Activated CD8-positive, alpha-beta memory T cell treated with anti-CD3 and anti-CD28 coated beads, Interleukin-2, amount 10 ng/mL, durations not matched to agents 7 days and 5 days (primary cell): ENCODE measurements at regions of chr21 and their contacts with region 1.

Region 1: GRCh38 chr21:42220138-42220701 is 1.3 kb downstream of the ABCG1 start:
- DNase-seq: peak; percentile 82
- ATAC-seq: peak; percentile 80
- H3K4me3 Mint-ChIP-seq: peak overlapping the region; percentile 80
- H3K27ac Mint-ChIP-seq: peak overlapping the region; percentile 89
- H3K4me1 Mint-ChIP-seq: peaks cover 9% of the 10 kb centered on the region
- H3K27me3 Mint-ChIP-seq: no peaks in the 10 kb centered on the region

Region 2: DNA sequence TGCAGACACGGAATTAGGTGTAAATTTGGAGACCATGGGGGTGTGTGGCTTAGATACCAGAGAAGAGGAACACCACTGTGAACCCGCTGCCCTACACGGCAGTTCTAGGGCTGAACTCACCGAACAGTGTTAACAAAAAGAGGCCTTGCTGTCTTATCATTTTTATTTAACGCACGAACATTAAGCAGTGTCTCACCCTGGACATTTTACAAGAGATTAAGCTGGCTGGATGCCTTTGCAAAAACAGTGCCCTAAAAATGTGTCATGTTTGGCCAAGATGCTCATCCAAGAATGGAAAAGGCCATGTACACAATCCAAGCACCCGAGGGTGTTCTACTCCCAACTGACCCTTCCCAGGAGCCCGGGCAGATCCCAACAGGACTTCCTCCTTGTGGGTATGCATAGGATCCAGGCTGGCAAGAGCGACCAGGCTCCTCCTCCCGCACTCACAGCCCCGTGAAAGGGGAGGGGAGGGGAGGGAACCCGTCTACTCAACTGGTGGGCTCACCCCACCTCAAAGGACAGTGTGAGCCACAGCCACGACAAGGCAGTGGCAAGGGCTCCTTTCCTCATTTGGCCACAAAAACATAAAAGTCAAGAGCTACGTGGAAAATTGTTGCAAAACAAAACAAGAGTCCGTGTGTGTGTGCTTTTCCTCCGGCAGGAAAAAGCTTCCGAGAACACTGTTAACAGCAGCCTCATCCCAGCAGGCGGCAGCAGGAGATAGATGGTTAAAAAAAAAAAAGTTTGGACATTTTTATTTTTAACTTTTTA is 286.7 kb before region 1 on chr21:
- CTCF ChIA-PET with region 1: no interaction called
- DNase-seq: no peak
- ATAC-seq: no peak
- H3K4me3 Mint-ChIP-seq: no peak overlapping the region
- H3K27ac Mint-ChIP-seq: no peak overlapping the region
- H3K4me1 Mint-ChIP-seq: peaks cover 9% of the 10 kb centered on the region
- H3K27me3 Mint-ChIP-seq: peaks cover 46% of the 10 kb centered on the region

Region 3: GRCh38 chr21:42164064-42164789 is 56.0 kb before region 1 on chr21:
- CTCF ChIA-PET with region 1: interaction called, 11 read pairs
- DNase-seq: peak; percentile 80
- ATAC-seq: peak; percentile 89
- H3K4me3 Mint-ChIP-seq: no peak overlapping the region
- H3K27ac Mint-ChIP-seq: no peak overlapping the region
- H3K4me1 Mint-ChIP-seq: peaks cover 25% of the 10 kb centered on the region
- H3K27me3 Mint-ChIP-seq: peaks cover under 1% of the 10 kb centered on the region

Region 4: DNA sequence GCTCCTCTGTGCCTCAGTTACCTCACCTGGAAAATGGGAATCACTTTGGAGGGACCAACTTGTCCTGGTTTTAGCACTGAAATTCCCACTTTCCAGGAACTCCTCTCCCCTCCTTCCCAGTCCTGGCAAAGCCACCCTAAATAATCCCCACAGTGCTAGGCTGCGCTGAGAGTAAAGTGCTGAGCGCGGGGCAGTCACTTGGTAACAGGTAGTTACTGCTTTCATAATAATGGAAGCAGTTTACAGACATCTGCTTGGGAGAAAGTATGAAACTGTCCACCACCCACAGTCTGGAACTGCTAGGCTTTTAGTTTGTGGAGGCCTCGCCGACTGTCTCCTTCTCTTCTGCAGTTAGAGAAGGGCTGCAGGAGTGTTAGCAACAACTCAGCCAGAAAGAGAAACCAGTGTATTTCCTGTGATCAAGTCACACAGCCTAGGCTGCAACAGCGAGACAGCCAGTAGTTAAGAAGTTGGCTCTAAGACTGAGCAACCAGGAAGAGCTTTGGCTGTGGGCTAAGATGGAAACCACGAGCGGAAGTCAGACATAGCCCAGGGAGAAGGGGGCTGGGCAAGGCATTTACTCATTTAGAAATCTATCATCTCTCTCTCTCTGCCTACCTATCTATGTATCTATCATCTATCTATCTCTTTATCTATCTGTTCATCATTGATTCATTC is 32.1 kb before region 1 on chr21:
- CTCF ChIA-PET with region 1: interaction called, 23 read pairs
- DNase-seq: peak; percentile 95
- ATAC-seq: peak; percentile 93
- H3K4me3 Mint-ChIP-seq: peak overlapping the region; percentile 56
- H3K27ac Mint-ChIP-seq: peak overlapping the region; percentile 95
- H3K4me1 Mint-ChIP-seq: peaks cover 71% of the 10 kb centered on the region
- H3K27me3 Mint-ChIP-seq: peaks cover 18% of the 10 kb centered on the region

Region 5: GRCh38 chr21:42193131-42193671 is 27.0 kb before region 1 on chr21:
- CTCF ChIA-PET with region 1: interaction called, 23 read pairs
- DNase-seq: peak; percentile 94
- ATAC-seq: peak; percentile 40
- H3K4me3 Mint-ChIP-seq: no peak overlapping the region
- H3K27ac Mint-ChIP-seq: peak overlapping the region; percentile 58
- H3K4me1 Mint-ChIP-seq: peaks cover 71% of the 10 kb centered on the region
- H3K27me3 Mint-ChIP-seq: peaks cover 25% of the 10 kb centered on the region

Region 6: DNA sequence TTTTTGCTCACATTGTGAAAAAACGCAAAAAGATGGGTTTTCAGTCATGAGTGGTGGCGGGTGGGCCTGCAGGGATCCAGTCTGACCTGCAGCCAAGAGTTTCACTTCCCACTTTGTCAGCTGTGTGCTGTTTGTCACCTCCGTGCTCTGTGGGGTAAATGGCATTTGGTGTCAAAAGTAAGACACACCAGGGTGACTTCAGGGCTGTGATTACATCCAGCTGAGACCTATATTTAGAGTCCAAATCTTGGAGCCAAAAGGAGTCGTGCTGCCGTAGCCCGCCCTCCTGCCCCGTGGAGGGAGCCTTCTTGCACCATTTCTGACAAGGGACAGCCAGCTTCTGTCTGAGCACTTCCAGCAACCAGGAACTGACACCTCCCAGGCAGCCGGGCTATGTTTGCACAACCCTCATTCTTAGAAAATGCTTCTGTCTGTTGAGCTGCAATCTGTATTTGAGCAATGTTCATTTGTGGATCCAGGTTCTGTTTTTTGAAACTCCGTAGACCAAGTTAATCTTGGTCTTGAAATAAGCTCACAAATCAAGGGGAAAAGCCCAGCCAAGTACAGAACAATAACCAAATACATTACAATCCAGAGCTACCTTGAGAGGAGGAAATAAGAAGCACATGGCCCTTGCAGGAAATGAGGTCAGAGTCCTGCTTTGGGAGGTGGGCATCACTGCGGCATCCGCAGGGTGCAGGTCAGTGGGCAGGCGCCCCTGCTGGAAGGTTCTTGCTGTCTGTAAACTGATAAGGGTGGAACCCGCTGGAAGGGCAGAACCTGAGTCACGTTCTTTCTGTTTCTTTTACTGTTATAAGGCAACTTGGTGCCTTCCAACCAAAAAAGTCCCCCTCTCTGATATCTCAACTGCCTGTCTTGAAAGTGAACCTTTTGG is 13.1 kb after region 1 on chr21:
- CTCF ChIA-PET with region 1: interaction called, 25 read pairs
- DNase-seq: peak; percentile 90
- ATAC-seq: peak; percentile 56
- H3K4me3 Mint-ChIP-seq: peak overlapping the region; percentile 23
- H3K27ac Mint-ChIP-seq: peak overlapping the region; percentile 89
- H3K4me1 Mint-ChIP-seq: peaks cover 88% of the 10 kb centered on the region
- H3K27me3 Mint-ChIP-seq: no peaks in the 10 kb centered on the region

Region 7: GRCh38 chr21:42238185-42238934 is 18.1 kb after region 1 on chr21:
- CTCF ChIA-PET with region 1: interaction called, 25 read pairs
- DNase-seq: peak; percentile 74
- ATAC-seq: peak; percentile 22
- H3K4me3 Mint-ChIP-seq: peak overlapping the region; percentile 47
- H3K27ac Mint-ChIP-seq: peak overlapping the region; percentile 86
- H3K4me1 Mint-ChIP-seq: peaks cover 59% of the 10 kb centered on the region
- H3K27me3 Mint-ChIP-seq: no peaks in the 10 kb centered on the region